Aorta (tissue), 5 donors: ENCODE measurements at regions of chr21 and their contacts with region 1.

Region 1: GRCh38 chr21:42009831-42010523 is at the start of gene ZBTB21:
- DNase-seq: peak; percentile 99 to 100
- ATAC-seq: peak; percentile 97
- H3K4me3 ChIP-seq: peak within 1 kb of the TSS; percentile 49 to 74
- H3K27ac ChIP-seq: peak within 1 kb of the TSS; percentile 95 to 97
- H3K4me1 ChIP-seq: peaks cover 1 to 5% of the 10 kb centered on the region in 2 donors
- H3K27me3 ChIP-seq: no peaks in the 10 kb centered on the region
- total RNA-seq, gene ZBTB21: 21.8 to 52.8 TPM

Region 2: DNA sequence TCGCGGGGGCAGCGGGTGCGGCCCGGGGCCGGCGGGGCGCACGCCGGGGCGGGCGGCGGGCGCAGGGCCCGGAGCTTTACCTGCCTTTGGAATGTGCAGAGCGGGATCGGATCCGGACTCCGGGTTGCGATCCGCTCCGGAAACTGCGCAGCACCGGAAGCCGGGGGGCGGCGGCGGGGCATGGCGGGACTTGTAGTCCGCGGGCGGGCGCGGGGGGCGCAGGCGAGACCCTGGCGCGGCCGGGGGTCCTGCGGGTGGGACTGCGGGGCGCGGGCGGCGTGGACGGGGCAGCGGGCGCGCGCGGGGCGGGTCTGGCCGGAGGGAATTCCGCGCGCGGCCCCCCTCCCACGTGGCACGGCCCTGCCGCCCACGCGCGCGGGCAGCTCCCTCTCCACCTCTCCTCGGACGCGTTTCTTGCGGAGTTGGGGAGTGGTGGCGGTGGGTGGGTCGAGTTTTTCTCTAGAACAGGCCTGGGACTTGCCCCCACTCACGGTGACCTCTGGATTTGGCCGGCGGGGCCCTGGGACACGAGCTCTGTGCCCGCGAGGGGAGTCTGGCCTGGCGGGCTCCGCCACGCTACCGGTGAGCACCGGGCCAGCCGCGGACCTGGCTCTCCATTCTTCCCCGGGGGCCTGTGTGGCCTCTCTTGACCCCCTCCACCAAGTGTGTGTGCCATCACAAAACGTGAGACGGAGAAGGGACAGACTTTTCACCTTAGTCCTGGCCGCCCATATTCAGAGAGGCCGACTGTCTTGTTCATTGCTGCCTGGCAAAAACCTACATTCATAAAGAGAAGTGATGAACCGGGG is 130.6 kb before region 1 on chr21 and contains the start of gene PRDM15:
- intact Hi-C with region 1: loop called in 1 of 2 experiments (anchors 10 kb)
- DNase-seq: peak; percentile 89 to 94
- ATAC-seq: peak; percentile 75
- H3K4me3 ChIP-seq: peak within 1 kb of the TSS; percentile 59 to 83
- H3K27ac ChIP-seq: peak within 1 kb of the TSS; percentile 45 to 46
- H3K4me1 ChIP-seq: no peaks in the 10 kb centered on the region
- H3K27me3 ChIP-seq: no peaks in the 10 kb centered on the region
- total RNA-seq, gene PRDM15: 9.0 to 11.5 TPM

Region 3: DNA sequence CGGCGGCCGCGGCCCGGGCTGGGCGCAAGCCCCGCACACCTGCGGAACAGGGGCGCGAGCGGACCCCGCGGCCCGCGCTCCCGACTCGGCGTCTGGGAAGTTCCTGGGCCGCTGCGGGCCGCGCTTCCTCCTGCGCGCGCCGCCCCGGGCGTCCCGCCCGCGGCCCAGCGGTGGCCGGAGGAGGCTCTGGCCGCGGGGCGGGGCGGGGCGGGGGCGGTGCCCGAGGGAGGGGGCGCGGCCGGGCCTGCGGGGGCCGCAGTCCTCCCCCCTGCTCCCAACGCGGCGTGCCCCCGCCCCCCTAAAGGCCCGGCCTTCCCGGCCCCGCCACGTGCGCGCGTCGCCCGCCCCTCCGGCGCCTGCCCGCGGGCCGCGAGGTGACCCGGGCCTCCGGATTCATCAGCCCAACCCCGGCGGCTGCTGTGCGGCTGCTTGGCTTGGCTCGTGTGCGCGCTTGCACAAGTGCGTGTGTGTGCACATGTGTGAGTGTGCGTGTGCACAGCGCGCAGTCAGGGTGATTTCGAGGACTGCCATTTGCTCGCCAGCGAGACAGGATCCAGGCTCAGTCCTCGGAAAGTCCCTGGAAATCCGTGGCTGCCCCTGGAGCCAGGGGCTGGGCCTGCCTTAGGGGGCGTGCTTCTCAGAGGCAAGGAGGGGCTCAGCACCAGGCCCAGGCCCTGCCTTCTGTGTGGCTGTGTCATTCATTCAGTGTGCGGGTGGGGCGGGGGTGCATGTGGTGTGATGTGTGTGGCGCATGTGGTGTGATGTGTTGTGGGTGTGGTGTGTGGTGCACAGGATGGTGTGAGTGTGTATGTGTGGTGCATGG is 55.9 kb before region 1 on chr21 and contains the start of gene C2CD2:
- intact Hi-C with region 1: loop called in 1 of 2 experiments (anchors 1 kb)
- DNase-seq: peak; percentile 83 to 92
- ATAC-seq: peak; percentile 89
- H3K4me3 ChIP-seq: peak within 1 kb of the TSS; percentile 76 to 78
- H3K27ac ChIP-seq: peak within 1 kb of the TSS in 1 of 2 donors; percentile 78
- H3K4me1 ChIP-seq: no peaks in the 10 kb centered on the region
- H3K27me3 ChIP-seq: no peaks in the 10 kb centered on the region
- total RNA-seq, gene C2CD2: 56.8 to 59.8 TPM

Region 4: DNA sequence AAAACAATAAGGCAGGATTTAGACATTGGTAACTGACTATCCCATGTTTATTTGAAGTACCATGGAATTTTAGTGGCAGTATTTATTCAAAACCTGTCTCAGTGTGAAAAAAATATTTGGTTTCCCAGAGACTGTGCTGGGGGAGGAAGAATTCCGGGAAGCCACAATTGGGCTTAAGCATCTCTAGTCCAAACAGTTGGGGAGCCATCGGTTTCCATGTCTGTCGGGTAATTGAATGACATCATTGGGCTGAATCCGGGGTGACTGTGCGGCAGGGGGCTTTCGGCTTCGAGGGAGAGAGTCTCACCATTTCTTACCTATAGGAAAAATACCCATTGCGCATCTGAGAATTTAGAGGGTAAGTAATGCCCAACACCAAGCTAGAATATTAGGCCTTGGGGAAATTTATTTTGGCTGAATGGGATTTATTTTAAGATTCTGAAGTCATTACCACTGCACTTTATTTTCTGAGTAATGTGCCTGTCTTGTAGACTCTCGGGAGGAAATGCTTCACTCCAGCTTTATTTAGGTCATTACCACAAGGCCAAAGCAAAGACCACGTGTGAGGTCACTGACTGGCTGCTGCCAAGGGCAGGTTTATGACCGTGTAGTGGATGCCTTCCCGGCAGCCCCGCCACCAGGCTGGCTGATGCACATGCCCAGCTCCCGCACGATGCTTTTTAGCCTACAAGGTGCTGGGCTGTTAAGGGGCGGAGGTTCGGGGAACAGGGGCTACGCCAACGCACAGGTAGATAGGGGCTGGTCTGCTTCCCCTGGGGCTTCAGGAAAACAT is 38.0 kb after region 1 on chr21:
- intact Hi-C with region 1: loop called (anchors 2 to 5 kb)
- DNase-seq: peak; percentile 92 to 93
- ATAC-seq: peak; percentile 94
- H3K4me3 ChIP-seq: no peak overlapping the region
- H3K27ac ChIP-seq: peak overlapping the region; percentile 78 to 95
- H3K4me1 ChIP-seq: peaks cover 0 to 4% of the 10 kb centered on the region in 2 donors
- H3K27me3 ChIP-seq: no peaks in the 10 kb centered on the region

Region 5: DNA sequence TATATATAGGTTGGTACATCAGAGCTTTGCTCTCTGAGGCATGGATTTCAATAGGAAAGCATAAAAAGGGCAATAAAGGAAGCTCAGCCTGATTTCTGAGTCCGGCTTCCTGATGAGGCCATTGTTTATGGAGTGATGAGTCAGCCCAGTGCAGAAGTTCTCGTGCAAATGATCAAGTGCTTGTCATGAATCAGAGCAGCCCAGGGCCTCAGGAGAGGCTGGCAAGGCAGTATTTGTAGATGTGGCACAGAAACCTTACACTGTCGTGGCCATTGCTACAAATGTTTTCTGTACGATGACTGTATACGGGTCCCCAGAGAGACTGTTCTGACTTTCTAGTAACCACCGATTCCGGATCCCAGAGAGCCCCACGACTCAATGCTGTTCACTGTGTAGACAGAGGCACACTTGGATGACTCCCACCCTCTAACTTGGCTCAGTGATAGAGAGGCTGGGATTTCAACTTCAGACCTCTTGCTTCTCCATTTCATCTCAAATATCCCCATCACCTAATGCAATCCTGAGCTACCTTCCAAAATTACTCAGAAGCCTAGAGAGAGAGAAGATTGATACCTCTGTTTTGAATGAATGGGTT is 88.0 kb after region 1 on chr21:
- intact Hi-C with region 1: loop called (anchors 1 to 5 kb)
- DNase-seq: peak in 1 of 2 donors; percentile 89
- ATAC-seq: peak; percentile 81
- H3K4me3 ChIP-seq: no peak overlapping the region
- H3K27ac ChIP-seq: peak overlapping the region; percentile 85 to 91
- H3K4me1 ChIP-seq: peaks cover 5 to 8% of the 10 kb centered on the region in 2 donors
- H3K27me3 ChIP-seq: no peaks in the 10 kb centered on the region

Region 6: GRCh38 chr21:42107881-42108553 is 98.0 kb after region 1 on chr21:
- intact Hi-C with region 1: loop called (anchors 5 kb)
- DNase-seq: peak; percentile 77 to 87
- ATAC-seq: peak; percentile 83
- H3K4me3 ChIP-seq: no peak overlapping the region
- H3K27ac ChIP-seq: no peak overlapping the region
- H3K4me1 ChIP-seq: no peaks in the 10 kb centered on the region
- H3K27me3 ChIP-seq: no peaks in the 10 kb centered on the region

Region 7: DNA sequence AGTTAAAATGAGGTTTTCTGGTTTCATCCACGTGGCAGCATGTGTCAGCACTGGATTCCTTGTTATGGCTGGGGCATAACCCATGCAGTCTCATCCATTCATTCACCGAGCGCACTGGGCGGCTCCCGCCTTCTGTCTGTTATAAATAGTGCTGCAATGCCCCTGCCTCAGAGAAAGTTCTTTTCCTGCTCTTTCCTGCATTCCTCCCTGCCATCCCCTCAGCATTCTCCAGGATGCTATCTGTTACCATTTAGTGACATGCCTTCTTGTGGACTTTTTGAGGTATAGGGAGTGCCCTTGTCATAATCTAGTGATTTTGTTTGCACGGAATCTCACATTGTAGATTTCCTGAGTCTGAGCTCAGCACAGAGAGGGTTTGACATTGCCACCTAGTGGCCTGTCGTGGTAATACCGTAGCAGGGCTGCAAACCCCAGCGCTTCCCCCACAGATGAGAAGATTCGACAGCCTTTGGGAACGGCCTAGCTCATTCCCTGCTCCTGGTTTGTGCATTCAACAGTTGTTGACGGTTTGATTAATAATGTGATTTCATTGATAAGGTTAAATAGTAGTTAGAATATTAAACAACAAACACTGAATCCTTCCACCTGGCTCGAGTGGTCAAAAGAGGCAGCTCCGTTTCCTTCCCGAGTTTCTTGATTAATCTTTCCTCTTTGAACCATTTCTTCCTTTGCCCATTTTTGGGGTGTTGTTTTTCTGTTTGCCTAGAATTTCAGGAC is 107.4 kb after region 1 on chr21:
- intact Hi-C with region 1: loop called in 1 of 2 experiments (anchors 1 kb)
- DNase-seq: peak; percentile 80 to 92
- ATAC-seq: peak; percentile 87
- H3K4me3 ChIP-seq: no peak overlapping the region
- H3K27ac ChIP-seq: no peak overlapping the region
- H3K4me1 ChIP-seq: no peaks in the 10 kb centered on the region
- H3K27me3 ChIP-seq: no peaks in the 10 kb centered on the region